Colonic mucosa (tissue), 4 donors: ENCODE measurements at regions of chr15 and their contacts with region 1.

Region 1: GRCh38 chr15:58232241-58232640 is 94.1 kb downstream of the AQP9 start:
- DNase-seq: no peak
- H3K4me3 ChIP-seq: no peak overlapping the region
- H3K27ac ChIP-seq: no peak overlapping the region
- H3K4me1 ChIP-seq: no peaks in the 10 kb centered on the region
- H3K27me3 ChIP-seq: no peaks in the 10 kb centered on the region
- CTCF ChIP-seq: no peak

Region 2: DNA sequence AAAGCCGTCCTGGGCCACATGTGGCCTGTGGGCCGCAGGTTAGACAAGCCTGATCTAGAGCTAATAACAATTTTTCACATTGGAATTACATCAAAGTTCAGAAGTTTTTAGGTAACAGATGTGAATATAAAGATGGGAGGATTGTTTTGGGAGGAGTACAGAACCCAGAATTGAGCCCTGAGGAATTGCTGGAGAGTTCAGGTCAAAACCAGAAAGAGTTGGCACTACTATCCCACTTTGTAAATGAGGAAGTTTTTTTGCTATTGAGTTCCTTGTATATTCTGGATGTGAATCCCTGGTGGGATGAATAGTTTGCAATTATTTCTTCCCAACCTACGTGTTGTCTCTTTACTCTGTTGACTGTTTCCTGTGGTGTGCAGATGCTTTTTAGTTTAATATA is 90.0 kb after region 1 on chr15:
- intact Hi-C with region 1: no loop called
- DNase-seq: no peak
- H3K4me3 ChIP-seq: no peak overlapping the region
- H3K27ac ChIP-seq: no peak overlapping the region
- H3K4me1 ChIP-seq: no peaks in the 10 kb centered on the region
- H3K27me3 ChIP-seq: no peaks in the 10 kb centered on the region
- CTCF ChIP-seq: no peak

Region 3: DNA sequence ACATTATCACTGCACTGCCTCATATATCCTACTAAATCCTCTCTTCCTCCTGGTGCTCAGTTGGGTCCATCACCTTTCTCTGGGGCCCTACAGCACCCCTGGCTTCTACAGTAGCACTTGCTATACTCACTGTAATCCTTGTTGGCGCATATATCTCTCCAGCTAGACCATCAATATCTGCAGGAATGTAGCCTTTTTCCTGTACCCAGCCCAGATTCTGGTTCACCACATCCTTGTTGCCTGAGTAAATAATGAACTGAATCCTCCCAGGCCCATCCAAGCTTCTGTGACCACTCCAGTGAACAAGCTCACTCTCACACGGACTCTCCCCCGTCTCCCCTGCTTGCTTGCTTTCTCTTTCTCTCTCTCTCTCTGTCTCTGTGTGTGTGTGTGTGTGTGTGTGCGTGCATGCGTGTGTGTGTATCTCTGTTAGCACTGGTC is 137.0 kb after region 1 on chr15:
- intact Hi-C with region 1: no loop called
- DNase-seq: no peak
- H3K4me3 ChIP-seq: no peak overlapping the region
- H3K27ac ChIP-seq: no peak overlapping the region
- H3K4me1 ChIP-seq: no peaks in the 10 kb centered on the region
- H3K27me3 ChIP-seq: no peaks in the 10 kb centered on the region
- CTCF ChIP-seq: no peak

Region 4: GRCh38 chr15:58761010-58761388 is 528.8 kb after region 1 on chr15:
- intact Hi-C with region 1: loop called (anchors 10 kb)
- DNase-seq: no peak
- H3K4me3 ChIP-seq: no peak overlapping the region
- H3K27ac ChIP-seq: no peak overlapping the region
- H3K4me1 ChIP-seq: no peaks in the 10 kb centered on the region
- H3K27me3 ChIP-seq: no peaks in the 10 kb centered on the region
- CTCF ChIP-seq: no peak